Dendritic cell treated with granulocyte-macrophage colony-stimulating factor and Interleukin-4, amounts not matched to agents 40 ng/mL and 50 ng/mL, for 4 days (primary cell): ENCODE measurements at regions of chr3 and their contacts with region 1.

Region 1: DNA sequence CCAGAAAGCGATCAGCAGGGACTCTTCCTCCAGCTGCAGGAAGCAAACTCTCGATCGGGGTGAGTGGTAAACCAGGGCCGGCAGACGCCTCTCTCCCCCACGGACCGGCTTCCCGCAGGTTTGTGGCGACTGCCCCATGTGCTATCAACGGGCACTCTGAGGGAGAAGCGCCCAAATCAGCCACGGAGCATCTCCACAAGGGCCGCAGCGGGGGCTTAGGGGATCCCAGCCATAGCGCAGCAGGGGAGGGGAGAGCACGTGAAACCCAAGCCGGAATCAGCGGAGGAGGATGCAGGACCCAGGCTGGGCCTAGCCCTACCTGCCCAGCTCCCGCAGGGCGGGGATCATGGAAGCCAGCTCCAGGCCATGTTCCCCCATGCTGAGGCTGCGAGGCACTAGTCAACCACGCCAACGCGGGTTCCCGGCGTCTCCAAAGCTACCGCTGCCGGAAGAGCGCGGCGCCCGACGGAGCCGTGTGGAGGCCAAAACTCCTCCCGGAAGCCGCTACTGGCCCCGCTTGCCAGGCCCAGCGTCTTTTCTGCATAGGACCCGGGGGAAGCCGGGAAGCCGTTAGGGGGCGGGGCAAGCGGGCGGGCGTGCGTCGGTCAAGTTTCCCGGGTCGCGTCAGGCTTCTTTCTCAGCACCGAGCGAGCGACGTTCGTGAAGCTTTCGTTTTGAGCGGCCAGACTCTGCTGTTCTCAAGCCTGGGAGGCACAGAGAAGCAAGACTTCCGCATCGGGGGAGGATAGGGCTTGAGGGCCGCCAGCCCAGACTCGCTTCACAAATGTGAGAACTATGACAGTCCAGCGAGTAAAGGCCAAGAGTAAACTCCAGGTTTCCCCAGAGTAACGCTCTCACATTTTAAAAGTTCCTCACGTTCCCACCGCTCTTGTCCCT is at the start of gene ATR:
- H3K4me3 Mint-ChIP-seq: peak within 1 kb of the TSS; percentile 95
- H3K27ac Mint-ChIP-seq: peak within 1 kb of the TSS; percentile 99
- H3K4me1 Mint-ChIP-seq: peaks cover 54% of the 10 kb centered on the region
- H3K27me3 Mint-ChIP-seq: peaks cover 8% of the 10 kb centered on the region

Region 2: GRCh38 chr3:142447852-142448823 is 130.4 kb before region 1 on chr3 and contains the start of gene XRN1:
- intact Hi-C with region 1: loop called (anchors 5 kb)
- H3K4me3 Mint-ChIP-seq: peak within 1 kb of the TSS; percentile 97
- H3K27ac Mint-ChIP-seq: peak within 1 kb of the TSS; percentile 99
- H3K4me1 Mint-ChIP-seq: peaks cover 31% of the 10 kb centered on the region
- H3K27me3 Mint-ChIP-seq: no peaks in the 10 kb centered on the region

Region 3: GRCh38 chr3:142542054-142542453 is 36.5 kb before region 1 on chr3:
- intact Hi-C with region 1: no loop called
- H3K4me3 Mint-ChIP-seq: no peak overlapping the region
- H3K27ac Mint-ChIP-seq: no peak overlapping the region
- H3K4me1 Mint-ChIP-seq: no peaks in the 10 kb centered on the region
- H3K27me3 Mint-ChIP-seq: no peaks in the 10 kb centered on the region

Region 4: GRCh38 chr3:142595951-142596725 is 17.6 kb after region 1 on chr3 and contains the start of gene PLS1:
- intact Hi-C with region 1: loop called (anchors 2 kb)
- H3K4me3 Mint-ChIP-seq: peak within 1 kb of the TSS; percentile 94
- H3K27ac Mint-ChIP-seq: peak within 1 kb of the TSS; percentile 79
- H3K4me1 Mint-ChIP-seq: peaks cover 7% of the 10 kb centered on the region
- H3K27me3 Mint-ChIP-seq: peaks cover 16% of the 10 kb centered on the region

Region 5: GRCh38 chr3:143001369-143002082 is 423.0 kb after region 1 on chr3 and contains the start of gene U2SURP:
- intact Hi-C with region 1: loop called (anchors 1 kb)
- H3K4me3 Mint-ChIP-seq: peak within 1 kb of the TSS; percentile 81
- H3K27ac Mint-ChIP-seq: peak within 1 kb of the TSS; percentile 97
- H3K4me1 Mint-ChIP-seq: peaks cover 32% of the 10 kb centered on the region
- H3K27me3 Mint-ChIP-seq: no peaks in the 10 kb centered on the region